ENCODE measurements at regions of chr10 and their contacts with region 1.

Region 1: DNA sequence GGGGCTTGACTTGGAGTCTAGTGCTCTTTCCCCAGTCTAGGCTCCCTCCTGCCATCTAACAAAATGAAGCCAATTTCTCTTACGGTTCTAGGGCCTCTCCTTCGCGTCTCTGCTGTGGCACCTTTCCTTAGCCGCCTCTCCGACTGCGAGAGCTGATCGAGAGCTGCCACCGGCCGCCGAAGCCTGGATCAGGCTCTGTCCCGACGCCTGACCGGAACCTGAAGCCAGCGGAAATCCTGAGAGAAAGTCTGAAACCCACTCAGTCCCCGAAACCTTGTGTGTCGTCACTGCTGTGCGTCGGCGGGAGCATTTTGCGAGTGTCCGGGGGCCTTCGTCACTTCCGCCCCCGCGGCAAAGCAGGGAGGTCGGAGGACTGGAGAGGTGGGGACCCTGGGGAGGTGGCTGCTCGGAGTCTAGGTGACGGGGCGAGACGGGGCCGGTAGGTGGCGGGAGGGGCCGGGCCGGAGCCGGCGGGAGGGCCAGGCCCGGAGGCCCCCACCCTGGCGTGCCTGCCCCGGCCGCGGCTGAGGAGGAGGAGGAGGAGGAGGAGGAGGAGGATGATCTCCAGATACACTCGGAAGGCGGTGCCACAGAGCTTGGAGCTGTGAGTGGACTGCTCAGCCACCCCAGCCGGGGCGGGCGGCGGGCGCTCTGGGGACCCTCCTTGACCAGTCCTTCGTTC is at the starts of genes ECD and FAM149B1:
- DNase-seq: peak; percentile 92 to 96
- H3K4me3 ChIP-seq: peak within 1 kb of the TSS; percentile 83
- H3K27ac ChIP-seq: peak within 1 kb of the TSS; percentile 85
- H3K4me1 ChIP-seq: peaks cover 24% of the 10 kb centered on the region
- H3K27me3 ChIP-seq: no peaks in the 10 kb centered on the region
- CTCF ChIP-seq: peak; percentile 36; the same call in 1 of the 2 replicates
- total RNA-seq, gene ECD: 29.3 and 33.2 TPM in 2 replicates
- total RNA-seq, gene FAM149B1: 22.9 and 24.4 TPM in 2 replicates

Region 2: DNA sequence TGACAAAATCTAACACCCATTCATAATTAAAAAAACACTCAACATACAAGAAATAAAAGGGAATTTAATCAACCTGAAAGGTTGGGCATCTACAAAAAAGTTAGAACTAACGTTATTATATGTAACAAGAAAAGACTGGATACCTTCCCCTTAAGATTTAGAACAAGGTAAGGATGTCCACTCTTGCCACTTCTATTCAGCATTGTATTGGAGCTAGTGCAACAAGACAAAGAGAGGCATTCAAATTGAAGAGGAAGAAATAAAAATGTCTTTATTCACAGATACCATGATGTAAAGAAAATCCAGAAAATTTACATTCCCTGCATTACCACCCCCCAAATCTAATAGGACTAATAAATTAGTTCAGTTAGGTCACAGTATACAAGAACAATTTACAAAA is 18.3 kb after region 1 on chr10:
- CTCF ChIA-PET with region 1: interaction called, 10 read pairs
- POLR2A ChIA-PET with region 1: no interaction called
- intact Hi-C with region 1: no loop called
- DNase-seq: no peak
- H3K4me3 ChIP-seq: no peak overlapping the region
- H3K27ac ChIP-seq: no peak overlapping the region
- H3K4me1 ChIP-seq: no peaks in the 10 kb centered on the region
- H3K27me3 ChIP-seq: no peaks in the 10 kb centered on the region
- CTCF ChIP-seq: no peak

Region 3: DNA sequence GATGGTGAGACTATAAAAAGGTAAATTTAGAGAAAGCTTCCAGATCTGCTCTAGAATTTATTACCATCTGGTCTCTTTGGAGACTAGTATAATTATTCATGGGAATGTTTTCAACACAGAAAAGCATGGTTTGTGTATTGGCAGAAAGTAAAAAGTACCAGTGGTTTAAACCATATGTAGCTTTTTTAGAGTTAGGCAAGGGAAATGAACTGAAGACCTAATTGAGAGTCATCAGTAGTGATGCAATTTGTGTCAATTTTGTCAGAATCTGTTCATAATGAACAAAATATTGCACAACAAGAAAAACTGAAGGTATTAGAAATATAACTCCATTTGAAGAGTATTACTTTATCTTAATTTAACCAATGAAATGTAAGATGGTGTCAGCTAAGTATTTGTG is 1164.5 kb after region 1 on chr10:
- CTCF ChIA-PET with region 1: no interaction called
- POLR2A ChIA-PET with region 1: no interaction called
- intact Hi-C with region 1: no loop called
- DNase-seq: no peak
- H3K4me3 ChIP-seq: no peak overlapping the region
- H3K27ac ChIP-seq: peak overlapping the region; percentile 25; the same call in 1 of the 2 replicates
- H3K4me1 ChIP-seq: no peaks in the 10 kb centered on the region
- H3K27me3 ChIP-seq: no peaks in the 10 kb centered on the region
- CTCF ChIP-seq: no peak

Measured in PC-9 (cell line).